Activated CD4-positive, alpha-beta T cell treated with anti-CD3 and anti-CD28 coated beads for 36 hours (primary cell): ENCODE measurements at regions of chr16 and their contacts with region 1.

Region 1: DNA sequence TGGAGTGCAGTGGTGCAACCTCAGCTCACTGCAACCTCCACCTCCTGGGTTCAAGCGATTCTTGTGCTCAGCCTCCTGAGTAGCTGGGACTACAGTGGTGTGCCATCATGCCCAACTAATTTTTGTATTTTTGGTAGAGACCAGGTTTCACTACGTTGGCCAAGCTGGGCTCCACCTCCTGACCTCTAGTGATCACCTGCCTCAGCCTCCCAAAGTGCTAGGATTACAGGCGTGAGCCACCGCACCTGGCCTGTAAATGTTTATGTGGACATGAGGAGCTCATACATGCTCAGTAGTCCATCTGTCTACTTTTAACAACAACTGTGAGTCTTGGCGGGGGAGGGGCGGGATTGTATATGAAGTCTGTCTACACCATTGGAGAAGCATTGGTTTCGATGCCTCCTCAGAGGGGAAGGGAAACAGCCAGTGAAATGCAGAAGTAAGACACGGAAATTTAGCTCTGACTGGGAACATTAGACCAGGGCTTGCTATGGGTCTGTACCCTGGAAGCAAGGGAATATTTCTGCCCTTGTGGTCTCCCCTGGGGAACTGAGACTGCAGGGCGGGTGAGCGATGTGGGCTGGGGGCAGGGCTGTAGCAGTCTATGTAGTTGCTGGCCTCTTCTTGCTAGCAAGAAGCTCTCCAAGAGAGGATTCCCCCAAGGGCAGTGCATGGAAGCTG is 9.3 kb downstream of the NUBP1 start:
- DNase-seq: peak; percentile 29
- ATAC-seq: no peak
- H3K4me3 Mint-ChIP-seq: no peak overlapping the region
- H3K27ac Mint-ChIP-seq: no peak overlapping the region
- H3K4me1 Mint-ChIP-seq: peaks cover 36% of the 10 kb centered on the region
- H3K27me3 Mint-ChIP-seq: no peaks in the 10 kb centered on the region

Region 2: GRCh38 chr16:10787304-10787703 is 34.3 kb after region 1 on chr16:
- CTCF ChIA-PET with region 1: no interaction called
- POLR2A ChIA-PET with region 1: no interaction called
- intact Hi-C with region 1: no loop called
- DNase-seq: no peak
- ATAC-seq: no peak
- H3K4me3 Mint-ChIP-seq: no peak overlapping the region
- H3K27ac Mint-ChIP-seq: no peak overlapping the region
- H3K4me1 Mint-ChIP-seq: no peaks in the 10 kb centered on the region
- H3K27me3 Mint-ChIP-seq: peaks cover 2% of the 10 kb centered on the region

Region 3: DNA sequence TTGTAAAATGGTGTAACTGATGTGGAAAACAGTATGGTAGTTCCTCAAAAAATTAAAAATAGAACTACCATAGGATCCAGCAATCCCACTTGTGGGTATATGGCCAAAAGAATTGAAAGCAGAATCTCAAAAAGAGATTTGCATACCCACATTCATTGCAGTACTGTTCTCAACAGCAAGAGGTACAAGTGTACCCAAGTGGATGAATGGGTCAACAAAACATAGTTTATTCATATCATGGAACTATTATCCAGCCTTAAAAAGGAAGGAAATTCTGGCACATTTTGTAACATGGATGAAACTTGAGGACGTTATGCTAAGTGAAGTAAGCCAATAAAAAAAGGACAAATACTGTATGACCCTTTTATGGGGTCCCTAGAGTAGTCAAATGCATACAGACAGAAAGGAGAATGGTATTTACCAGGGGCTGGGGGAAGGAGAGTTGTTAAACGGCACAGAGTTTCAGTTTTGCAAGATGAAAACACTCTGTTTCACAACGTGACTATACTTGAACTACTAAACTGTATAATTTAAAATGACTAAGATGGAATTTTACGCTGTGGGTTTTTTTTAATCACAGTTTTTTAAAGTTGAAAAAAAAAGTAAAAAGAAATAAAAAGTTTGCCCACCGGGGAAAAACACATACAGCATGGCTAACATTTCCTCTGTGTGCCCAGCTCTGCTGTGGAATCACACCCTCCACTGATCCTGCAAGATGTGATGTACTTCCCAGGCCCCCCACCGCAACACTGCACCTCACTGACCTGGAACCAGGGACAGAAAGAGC is 59.5 kb after region 1 on chr16:
- CTCF ChIA-PET with region 1: no interaction called
- POLR2A ChIA-PET with region 1: no interaction called
- intact Hi-C with region 1: loop called in 1 of 2 experiments (anchors 2 kb)
- DNase-seq: peak; percentile 10
- ATAC-seq: peak; percentile 93
- H3K4me3 Mint-ChIP-seq: no peak overlapping the region
- H3K27ac Mint-ChIP-seq: no peak overlapping the region
- H3K4me1 Mint-ChIP-seq: peaks cover 9% of the 10 kb centered on the region
- H3K27me3 Mint-ChIP-seq: no peaks in the 10 kb centered on the region

Region 4: GRCh38 chr16:10871149-10871991 is 118.4 kb after region 1 on chr16:
- CTCF ChIA-PET with region 1: no interaction called
- POLR2A ChIA-PET with region 1: no interaction called
- intact Hi-C with region 1: loop called in 1 of 2 experiments (anchors 5 kb)
- DNase-seq: peak; percentile 87
- ATAC-seq: peak; percentile 92
- H3K4me3 Mint-ChIP-seq: peak overlapping the region; percentile 7
- H3K27ac Mint-ChIP-seq: peak overlapping the region; percentile 71
- H3K4me1 Mint-ChIP-seq: peaks cover 51% of the 10 kb centered on the region
- H3K27me3 Mint-ChIP-seq: peaks cover 43% of the 10 kb centered on the region

Region 5: GRCh38 chr16:11386791-11387546 is 634.0 kb after region 1 on chr16:
- CTCF ChIA-PET with region 1: no interaction called
- POLR2A ChIA-PET with region 1: no interaction called
- intact Hi-C with region 1: no loop called
- DNase-seq: peak; percentile 26
- ATAC-seq: peak; percentile 16
- H3K4me3 Mint-ChIP-seq: no peak overlapping the region
- H3K27ac Mint-ChIP-seq: no peak overlapping the region
- H3K4me1 Mint-ChIP-seq: peaks cover 5% of the 10 kb centered on the region
- H3K27me3 Mint-ChIP-seq: no peaks in the 10 kb centered on the region